K562 (cell line): ENCODE measurements at regions of chr12 and their contacts with region 1.

Region 1: GRCh38 chr12:62069976-62070375 is 190.2 kb upstream of the USP15 start:
- DNase-seq: no peak
- ATAC-seq: no peak
- H3K4me3 ChIP-seq: no peak overlapping the region
- H3K27ac ChIP-seq: no peak overlapping the region
- H3K4me1 ChIP-seq: no peaks in the 10 kb centered on the region
- H3K27me3 ChIP-seq: no peaks in the 10 kb centered on the region
- CTCF ChIP-seq: no peak
- EP300 ChIP-seq: no peak
- POLR2A ChIP-seq: no peak
- RAD21 ChIP-seq: no peak

Region 2: GRCh38 chr12:62016021-62016420 is 54.0 kb before region 1 on chr12:
- CTCF ChIA-PET with region 1: no interaction called
- POLR2A ChIA-PET with region 1: no interaction called
- in situ Hi-C with region 1: no loop called
- intact Hi-C with region 1: loop called (anchors 5 kb)
- DNase-seq: no peak
- ATAC-seq: no peak
- H3K4me3 ChIP-seq: no peak overlapping the region
- H3K27ac ChIP-seq: no peak overlapping the region
- H3K4me1 ChIP-seq: no peaks in the 10 kb centered on the region
- H3K27me3 ChIP-seq: no peaks in the 10 kb centered on the region
- CTCF ChIP-seq: no peak
- EP300 ChIP-seq: no peak
- POLR2A ChIP-seq: no peak
- RAD21 ChIP-seq: no peak

Region 3: DNA sequence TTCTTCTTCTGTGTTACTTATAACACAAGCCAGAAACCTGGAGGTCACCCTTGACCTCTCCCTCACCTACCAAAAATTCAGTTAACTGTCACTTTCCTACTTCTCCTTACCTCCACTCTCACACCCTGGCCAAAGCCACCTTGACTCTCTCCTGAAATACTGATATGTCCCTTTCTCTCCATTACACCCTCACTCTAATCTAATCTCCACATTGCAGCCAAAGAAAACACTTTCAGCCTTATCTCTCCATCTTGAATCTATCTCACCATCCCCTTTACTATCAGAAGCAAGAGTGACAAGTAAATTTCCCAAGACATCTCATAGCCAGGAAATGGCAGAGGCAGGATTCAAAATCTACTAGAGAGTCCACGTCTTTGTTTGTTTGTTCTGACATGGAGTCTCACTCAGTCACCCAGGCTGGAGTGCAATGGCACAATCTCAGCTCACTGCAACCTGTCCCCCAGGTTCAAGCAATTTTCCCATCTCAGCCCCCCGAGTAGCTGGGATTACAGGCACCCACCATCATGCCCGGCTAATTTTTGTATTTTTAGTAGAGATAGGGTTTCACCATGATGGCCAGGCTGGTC is 162.3 kb after region 1 on chr12:
- CTCF ChIA-PET with region 1: no interaction called
- POLR2A ChIA-PET with region 1: no interaction called
- in situ Hi-C with region 1: no loop called
- intact Hi-C with region 1: no loop called
- DNase-seq: peak in 2 of 4 experiments; percentile 26 to 53
- ATAC-seq: peak; percentile 64
- H3K4me3 ChIP-seq: no peak overlapping the region
- H3K27ac ChIP-seq: peak overlapping the region; percentile 49; the same call in 2 of the 3 replicates
- H3K4me1 ChIP-seq: peaks cover 8 to 14% of the 10 kb centered on the region in 2 experiments; a peak in 4 of 5 replicates
- H3K27me3 ChIP-seq: no peaks in the 10 kb centered on the region
- CTCF ChIP-seq: no peak
- EP300 ChIP-seq: peak; percentile 90
- POLR2A ChIP-seq: no peak
- RAD21 ChIP-seq: no peak